ENCODE measurements at regions of chr10 and their contacts with region 1.

Region 1: GRCh38 chr10:113922787-113923570 is 68.5 kb downstream of the NHLRC2 start:
- DNase-seq: no peak
- H3K4me3 Mint-ChIP-seq: no peak overlapping the region
- H3K27ac Mint-ChIP-seq: no peak overlapping the region
- H3K4me1 Mint-ChIP-seq: no peaks in the 10 kb centered on the region
- H3K27me3 Mint-ChIP-seq: peaks cover 15% of the 10 kb centered on the region

Region 2: GRCh38 chr10:113791691-113792090 is 131.3 kb before region 1 on chr10:
- CTCF ChIA-PET with region 1: no interaction called
- POLR2A ChIA-PET with region 1: no interaction called
- intact Hi-C with region 1: loop called (anchors 10 kb)
- DNase-seq: no peak
- H3K4me3 Mint-ChIP-seq: no peak overlapping the region
- H3K27ac Mint-ChIP-seq: no peak overlapping the region
- H3K4me1 Mint-ChIP-seq: no peaks in the 10 kb centered on the region
- H3K27me3 Mint-ChIP-seq: peaks cover 24% of the 10 kb centered on the region

Region 3: DNA sequence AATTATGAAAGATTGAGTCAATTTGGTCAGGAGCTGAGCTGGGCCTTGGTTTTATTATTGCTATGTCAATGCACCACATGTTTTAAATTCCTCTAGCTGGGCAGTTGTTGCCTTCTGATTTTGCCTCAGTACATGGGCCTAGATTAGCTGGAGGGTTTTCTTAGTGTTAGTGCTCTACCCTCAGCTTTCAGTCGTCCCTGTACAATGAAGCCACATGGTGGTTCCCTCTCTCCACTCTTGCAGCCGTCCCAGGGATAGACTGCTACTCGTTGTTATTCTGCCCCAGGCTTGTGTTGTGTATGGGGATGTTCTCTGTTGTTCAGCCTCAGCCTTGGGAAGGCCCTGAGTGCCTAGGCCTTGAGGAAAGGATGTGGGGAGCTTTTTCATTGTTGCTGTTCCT is 31.5 kb before region 1 on chr10:
- CTCF ChIA-PET with region 1: no interaction called
- POLR2A ChIA-PET with region 1: no interaction called
- intact Hi-C with region 1: no loop called
- DNase-seq: no peak
- H3K4me3 Mint-ChIP-seq: no peak overlapping the region
- H3K27ac Mint-ChIP-seq: no peak overlapping the region
- H3K4me1 Mint-ChIP-seq: peaks cover 2% of the 10 kb centered on the region
- H3K27me3 Mint-ChIP-seq: no peaks in the 10 kb centered on the region

Measured in activated CD4-positive, alpha-beta memory T cell treated with anti-CD3 and anti-CD28 coated beads for 36 hours (primary cell).